Caco-2 (cell line): ENCODE measurements at regions of chr7 and their contacts with region 1.

Region 1: GRCh38 chr7:104065491-104065890 is 76.0 kb upstream of the RELN start:
- DNase-seq: peak in 1 of 2 experiments; percentile 19
- H3K4me3 ChIP-seq: no peak overlapping the region
- H3K4me3 Mint-ChIP-seq: no peak overlapping the region
- H3K27ac Mint-ChIP-seq: peak overlapping the region; percentile 59
- H3K4me1 ChIP-seq: peaks cover 38% of the 10 kb centered on the region
- H3K4me1 Mint-ChIP-seq: no peaks in the 10 kb centered on the region
- H3K27me3 ChIP-seq: no peaks in the 10 kb centered on the region
- H3K27me3 Mint-ChIP-seq: no peaks in the 10 kb centered on the region
- CTCF ChIP-seq: no peak

Region 2: DNA sequence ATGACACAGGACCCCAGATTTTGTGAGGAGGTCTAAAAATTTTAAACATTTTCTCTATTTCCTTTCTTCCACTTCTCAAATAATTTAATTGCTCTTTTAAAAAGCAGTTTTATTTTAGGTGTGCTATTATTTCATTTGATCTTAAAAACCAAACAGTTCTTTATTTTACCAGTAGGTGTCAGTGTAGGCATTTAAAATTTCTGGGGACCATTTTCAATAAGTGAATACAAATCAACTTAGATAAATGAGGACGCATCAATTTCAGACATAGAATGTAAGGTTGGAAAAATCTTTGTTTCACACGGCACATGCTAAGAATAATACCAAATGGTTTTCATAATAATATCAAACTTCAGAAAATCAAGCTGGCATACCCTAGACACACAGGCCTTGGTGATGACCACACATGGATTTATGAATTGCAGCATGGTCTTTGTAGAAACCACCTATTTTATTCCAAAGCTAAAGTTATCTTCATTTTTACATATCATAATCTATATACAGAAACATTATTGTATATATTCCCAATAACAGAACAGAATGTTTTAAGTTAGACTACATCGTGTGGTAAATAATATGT is 491.9 kb before region 1 on chr7:
- CTCF ChIA-PET with region 1: no interaction called
- POLR2A ChIA-PET with region 1: no interaction called
- intact Hi-C with region 1: loop called (anchors 10 kb)
- DNase-seq: peak in 1 of 2 experiments; percentile 19
- H3K4me3 ChIP-seq: no peak overlapping the region
- H3K4me3 Mint-ChIP-seq: no peak overlapping the region
- H3K27ac Mint-ChIP-seq: no peak overlapping the region
- H3K4me1 ChIP-seq: peaks cover 36% of the 10 kb centered on the region
- H3K4me1 Mint-ChIP-seq: peaks cover 36% of the 10 kb centered on the region
- H3K27me3 ChIP-seq: no peaks in the 10 kb centered on the region
- H3K27me3 Mint-ChIP-seq: no peaks in the 10 kb centered on the region
- CTCF ChIP-seq: peak; percentile 40 to 54

Region 3: GRCh38 chr7:103605640-103606039 is 459.9 kb before region 1 on chr7:
- CTCF ChIA-PET with region 1: no interaction called
- POLR2A ChIA-PET with region 1: no interaction called
- intact Hi-C with region 1: loop called (anchors 1 kb)
- DNase-seq: no peak
- H3K4me3 ChIP-seq: no peak overlapping the region
- H3K4me3 Mint-ChIP-seq: no peak overlapping the region
- H3K27ac Mint-ChIP-seq: no peak overlapping the region
- H3K4me1 ChIP-seq: peaks cover 26% of the 10 kb centered on the region
- H3K4me1 Mint-ChIP-seq: peaks cover 15% of the 10 kb centered on the region
- H3K27me3 ChIP-seq: no peaks in the 10 kb centered on the region
- H3K27me3 Mint-ChIP-seq: no peaks in the 10 kb centered on the region
- CTCF ChIP-seq: no peak

Region 4: GRCh38 chr7:103660455-103661371 is 404.8 kb before region 1 on chr7:
- CTCF ChIA-PET with region 1: no interaction called
- POLR2A ChIA-PET with region 1: no interaction called
- intact Hi-C with region 1: loop called (anchors 1 kb)
- DNase-seq: peak; percentile 53 to 77
- H3K4me3 ChIP-seq: no peak overlapping the region
- H3K4me3 Mint-ChIP-seq: no peak overlapping the region
- H3K27ac Mint-ChIP-seq: peak overlapping the region; percentile 89
- H3K4me1 ChIP-seq: peaks cover 35% of the 10 kb centered on the region
- H3K4me1 Mint-ChIP-seq: peaks cover 22% of the 10 kb centered on the region
- H3K27me3 ChIP-seq: no peaks in the 10 kb centered on the region
- H3K27me3 Mint-ChIP-seq: no peaks in the 10 kb centered on the region
- CTCF ChIP-seq: no peak

Region 5: DNA sequence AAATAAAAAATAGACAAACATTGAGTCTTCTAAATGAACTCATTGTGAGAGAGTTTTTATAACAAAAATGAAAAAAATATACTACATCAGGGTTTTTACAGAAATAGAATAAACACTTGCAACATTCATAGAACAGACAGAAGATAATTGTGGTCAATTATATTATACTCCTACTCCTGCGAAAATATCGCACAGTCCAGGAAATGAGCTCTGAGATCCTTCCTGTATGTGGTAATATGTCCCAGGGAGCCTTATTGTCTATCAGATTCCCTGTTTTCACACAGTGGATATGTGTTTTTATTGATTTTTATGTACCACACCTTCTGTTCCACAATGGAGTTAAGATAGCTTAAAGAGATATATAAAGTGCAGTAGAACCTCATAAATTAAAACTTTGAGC is 48.5 kb before region 1 on chr7:
- CTCF ChIA-PET with region 1: no interaction called
- POLR2A ChIA-PET with region 1: no interaction called
- intact Hi-C with region 1: loop called (anchors 2 kb)
- DNase-seq: no peak
- H3K4me3 ChIP-seq: no peak overlapping the region
- H3K4me3 Mint-ChIP-seq: no peak overlapping the region
- H3K27ac Mint-ChIP-seq: no peak overlapping the region
- H3K4me1 ChIP-seq: no peaks in the 10 kb centered on the region
- H3K4me1 Mint-ChIP-seq: no peaks in the 10 kb centered on the region
- H3K27me3 ChIP-seq: no peaks in the 10 kb centered on the region
- H3K27me3 Mint-ChIP-seq: no peaks in the 10 kb centered on the region
- CTCF ChIP-seq: no peak

Region 6: GRCh38 chr7:104035351-104035750 is 30.1 kb before region 1 on chr7:
- CTCF ChIA-PET with region 1: no interaction called
- POLR2A ChIA-PET with region 1: no interaction called
- intact Hi-C with region 1: loop called (anchors 1 kb)
- DNase-seq: peak in 1 of 2 experiments; percentile 51
- H3K4me3 ChIP-seq: no peak overlapping the region
- H3K4me3 Mint-ChIP-seq: no peak overlapping the region
- H3K27ac Mint-ChIP-seq: peak overlapping the region; percentile 79
- H3K4me1 ChIP-seq: peaks cover 14% of the 10 kb centered on the region
- H3K4me1 Mint-ChIP-seq: peaks cover 12% of the 10 kb centered on the region
- H3K27me3 ChIP-seq: no peaks in the 10 kb centered on the region
- H3K27me3 Mint-ChIP-seq: no peaks in the 10 kb centered on the region
- CTCF ChIP-seq: no peak

Region 7: DNA sequence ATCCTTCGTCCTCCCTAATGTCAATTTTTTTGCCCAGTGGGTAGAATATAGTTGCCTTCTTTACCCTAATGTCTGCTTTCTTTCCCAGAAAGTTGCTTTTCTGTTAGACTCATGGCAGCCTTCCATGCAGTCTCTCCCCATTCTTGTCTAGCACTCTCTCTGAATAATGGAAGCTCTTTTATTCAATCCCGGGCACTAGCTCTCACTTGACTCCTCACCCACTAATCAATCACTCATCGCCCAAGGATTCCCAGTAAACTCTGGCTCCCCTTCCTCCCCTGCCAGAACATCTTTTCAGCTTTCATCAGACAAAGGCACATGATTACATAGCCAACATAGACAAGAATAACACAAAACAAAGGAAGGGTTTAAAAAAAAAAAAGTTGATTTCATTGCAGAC is 24.1 kb after region 1 on chr7:
- CTCF ChIA-PET with region 1: no interaction called
- POLR2A ChIA-PET with region 1: no interaction called
- intact Hi-C with region 1: loop called (anchors 1 kb)
- DNase-seq: peak; percentile 46 to 60
- H3K4me3 ChIP-seq: no peak overlapping the region
- H3K4me3 Mint-ChIP-seq: no peak overlapping the region
- H3K27ac Mint-ChIP-seq: peak overlapping the region; percentile 43
- H3K4me1 ChIP-seq: peaks cover 12% of the 10 kb centered on the region
- H3K4me1 Mint-ChIP-seq: peaks cover 19% of the 10 kb centered on the region
- H3K27me3 ChIP-seq: no peaks in the 10 kb centered on the region
- H3K27me3 Mint-ChIP-seq: no peaks in the 10 kb centered on the region
- CTCF ChIP-seq: no peak